Right ventricle myocardium superior (tissue), 1 donor: ENCODE measurements at regions of chr19 and their contacts with region 1.

Region 1: GRCh38 chr19:9934132-9934950 is 2.0 kb downstream of the OLFM2 start:
- DNase-seq: peak; percentile 79
- ATAC-seq: peak; percentile 80

Region 2: GRCh38 chr19:9903336-9903735 is 31.0 kb before region 1 on chr19:
- intact Hi-C with region 1: no loop called
- DNase-seq: no peak
- ATAC-seq: no peak

Region 3: DNA sequence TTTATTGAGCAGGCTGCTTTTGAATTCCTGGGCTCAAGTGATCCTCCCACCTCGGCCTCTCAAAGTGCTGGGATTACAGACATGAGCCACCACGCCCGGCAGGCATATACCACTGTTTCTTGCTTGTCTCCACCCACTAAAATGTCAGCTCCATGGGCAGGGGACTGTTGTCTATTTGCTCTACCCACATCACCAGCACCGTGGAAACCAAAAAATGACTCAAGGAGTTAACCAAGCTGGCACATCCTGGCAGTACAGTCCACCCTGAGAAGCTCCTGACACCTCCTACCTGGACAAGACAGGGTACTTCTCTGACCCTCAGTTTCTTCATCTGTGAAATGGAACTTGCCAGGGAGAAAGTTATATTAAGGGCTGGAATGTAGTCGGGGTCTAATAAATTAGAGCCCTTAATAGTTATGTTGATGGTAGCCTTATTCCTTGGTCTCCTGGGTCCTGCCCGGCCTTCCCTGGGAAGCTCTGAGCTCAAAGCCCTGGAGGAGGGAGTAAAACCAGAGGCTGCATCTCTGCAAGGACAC is 92.9 kb after region 1 on chr19:
- intact Hi-C with region 1: loop called (anchors 1 kb)
- DNase-seq: no peak
- ATAC-seq: peak; percentile 4

Region 4: DNA sequence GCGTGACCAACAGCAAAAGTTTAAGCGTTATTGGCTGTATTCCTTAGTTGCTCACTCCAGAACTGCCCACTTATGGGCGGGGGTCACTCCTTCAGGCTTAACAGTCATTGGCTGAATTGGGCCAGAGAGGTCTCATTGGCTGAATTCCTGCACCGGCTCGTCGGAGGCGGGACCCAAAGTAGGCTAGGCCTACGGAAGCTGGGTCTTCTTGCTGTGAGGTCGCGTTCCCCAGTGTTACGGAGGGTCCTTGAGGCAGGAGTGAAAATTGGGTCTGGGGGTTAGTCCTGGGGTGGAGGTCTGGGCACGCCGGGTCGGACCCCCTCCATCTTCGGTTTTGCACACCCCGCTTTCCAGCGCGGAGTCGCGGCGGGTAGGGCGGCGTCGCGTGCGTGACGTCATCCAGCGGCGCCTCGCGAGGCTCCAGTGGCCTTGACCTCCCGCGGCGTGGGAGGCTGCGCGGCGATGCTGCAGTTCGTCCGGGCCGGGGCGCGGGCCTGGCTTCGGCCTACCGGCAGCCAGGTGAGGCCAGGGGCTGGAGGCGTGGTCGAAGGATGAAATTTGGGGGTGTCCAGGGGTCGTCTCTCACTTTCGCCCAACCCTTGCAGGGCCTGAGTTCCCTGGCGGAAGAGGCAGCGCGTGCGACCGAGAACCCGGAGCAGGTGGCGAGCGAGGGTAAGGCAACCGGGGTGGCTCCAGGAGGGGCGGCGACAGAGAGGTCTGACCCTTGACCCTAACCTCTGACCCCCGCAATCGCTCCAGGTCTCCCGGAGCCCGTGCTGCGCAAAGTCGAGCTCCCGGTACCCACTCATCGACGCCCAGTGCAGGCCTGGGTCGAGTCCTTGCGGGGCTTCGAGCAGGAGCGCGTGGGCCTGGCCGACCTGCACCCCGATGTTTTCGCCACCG is 317.7 kb after region 1 on chr19 and contains the start of gene MRPL4:
- intact Hi-C with region 1: loop called (anchors 5 kb)
- DNase-seq: peak; percentile 97
- ATAC-seq: peak; percentile 95
- total RNA-seq, gene MRPL4: 72.4 TPM

Region 5: GRCh38 chr19:10380313-10381102 is 446.2 kb after region 1 on chr19 and contains the start of gene TYK2:
- intact Hi-C with region 1: loop called (anchors 10 kb)
- DNase-seq: peak; percentile 98
- ATAC-seq: peak; percentile 99
- total RNA-seq, gene TYK2: 60.3 TPM